ENCODE measurements at regions of chr9 and their contacts with region 1.

Region 1: GRCh38 chr9:87516222-87516925 is 18.7 kb downstream of the DAPK1 start:
- DNase-seq: peak; percentile 87

Region 2: GRCh38 chr9:87599901-87600610 is 83.7 kb after region 1 on chr9:
- intact Hi-C with region 1: loop called in 1 of 2 experiments (anchors 10 kb)
- DNase-seq: no peak

Region 3: DNA sequence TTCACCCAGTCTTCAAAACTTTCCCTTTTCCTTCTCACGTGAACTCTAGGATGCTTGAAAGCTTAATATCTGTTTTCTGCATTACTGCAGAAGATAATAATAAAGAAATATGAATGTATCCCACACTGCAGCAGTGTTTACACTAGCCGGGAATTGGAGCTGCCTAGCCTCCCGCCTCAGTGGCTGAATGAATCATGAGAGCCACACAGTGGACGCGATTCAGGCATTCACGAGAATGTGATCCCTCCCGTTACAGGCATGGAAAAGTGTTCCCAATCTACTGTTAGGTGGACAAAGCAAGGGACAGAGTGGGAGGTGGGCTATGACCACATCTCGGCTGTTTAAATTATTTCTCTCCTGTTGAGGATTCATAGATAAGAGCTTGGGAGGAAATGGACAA is 140.1 kb after region 1 on chr9:
- intact Hi-C with region 1: loop called in 1 of 2 experiments (anchors 10 kb)
- DNase-seq: no peak